ENCODE measurements at regions of chr12 and their contacts with region 1.

Region 1: GRCh38 chr12:106986625-106987430 is at the start of gene MTERF2:
- DNase-seq: peak; percentile 92 to 94
- H3K4me3 ChIP-seq: peak within 1 kb of the TSS; percentile 83
- H3K4me3 Mint-ChIP-seq: peak within 1 kb of the TSS; percentile 92
- H3K27ac Mint-ChIP-seq: peak within 1 kb of the TSS; percentile 87
- H3K4me1 ChIP-seq: peaks cover 5% of the 10 kb centered on the region; the same call in 1 of the 2 replicates
- H3K4me1 Mint-ChIP-seq: peaks cover 8% of the 10 kb centered on the region
- H3K27me3 ChIP-seq: no peaks in the 10 kb centered on the region
- H3K27me3 Mint-ChIP-seq: no peaks in the 10 kb centered on the region
- CTCF ChIP-seq: no peak
- total RNA-seq, gene MTERF2: 9.8 and 10.1 TPM in 2 replicates

Region 2: DNA sequence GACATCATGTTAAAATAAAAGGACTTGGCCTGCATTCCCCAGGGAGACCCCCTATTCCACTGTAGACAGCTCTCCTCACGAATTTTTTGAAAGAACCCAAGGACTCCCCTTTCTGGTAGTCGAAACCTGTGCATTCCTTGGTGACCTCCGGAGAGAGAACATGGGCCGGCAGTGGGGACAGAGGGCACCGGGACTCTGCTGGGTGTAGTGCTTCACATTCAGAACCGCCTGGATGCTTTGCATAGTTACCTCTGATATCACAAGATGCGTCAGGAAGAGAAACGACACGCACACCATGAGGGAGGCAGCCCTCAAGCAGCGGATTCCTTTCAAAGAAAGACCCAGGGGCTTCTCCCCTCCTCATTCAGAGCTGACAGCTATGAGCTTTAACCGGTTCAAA is 748.7 kb before region 1 on chr12:
- CTCF ChIA-PET with region 1: no interaction called
- POLR2A ChIA-PET with region 1: interaction called, 10 read pairs
- intact Hi-C with region 1: no loop called
- DNase-seq: no peak
- H3K4me3 ChIP-seq: no peak overlapping the region
- H3K4me3 Mint-ChIP-seq: no peak overlapping the region
- H3K27ac Mint-ChIP-seq: peak overlapping the region; percentile 62
- H3K4me1 ChIP-seq: no peaks in the 10 kb centered on the region
- H3K4me1 Mint-ChIP-seq: peaks cover 7% of the 10 kb centered on the region
- H3K27me3 ChIP-seq: no peaks in the 10 kb centered on the region
- H3K27me3 Mint-ChIP-seq: no peaks in the 10 kb centered on the region
- CTCF ChIP-seq: no peak

Region 3: DNA sequence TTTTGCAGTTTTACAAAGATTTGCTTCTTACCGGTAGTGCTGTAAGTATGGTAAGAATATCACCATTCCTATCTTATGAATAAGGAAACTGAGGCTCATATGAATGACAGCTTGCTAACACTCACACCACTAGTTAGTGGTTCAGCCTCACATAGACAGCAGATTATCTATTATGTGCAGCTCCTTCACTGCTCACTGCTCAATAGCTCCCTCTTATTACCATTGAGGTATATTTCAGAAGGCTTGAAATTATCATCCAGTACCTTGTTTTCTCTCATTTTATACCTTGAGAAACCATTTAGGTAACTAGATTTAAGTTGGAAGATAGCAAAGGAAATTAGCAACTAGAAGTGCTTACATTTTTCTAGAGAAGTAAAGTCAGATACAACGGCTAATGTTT is 196.8 kb before region 1 on chr12:
- CTCF ChIA-PET with region 1: no interaction called
- POLR2A ChIA-PET with region 1: no interaction called
- intact Hi-C with region 1: no loop called
- DNase-seq: no peak
- H3K4me3 ChIP-seq: no peak overlapping the region
- H3K4me3 Mint-ChIP-seq: no peak overlapping the region
- H3K27ac Mint-ChIP-seq: no peak overlapping the region
- H3K4me1 ChIP-seq: no peaks in the 10 kb centered on the region
- H3K4me1 Mint-ChIP-seq: peaks cover 8% of the 10 kb centered on the region
- H3K27me3 ChIP-seq: no peaks in the 10 kb centered on the region
- H3K27me3 Mint-ChIP-seq: no peaks in the 10 kb centered on the region
- CTCF ChIP-seq: peak; percentile 27 to 33

Region 4: GRCh38 chr12:107225635-107226034 is 238.8 kb after region 1 on chr12:
- CTCF ChIA-PET with region 1: no interaction called
- POLR2A ChIA-PET with region 1: no interaction called
- intact Hi-C with region 1: no loop called
- DNase-seq: no peak
- H3K4me3 ChIP-seq: no peak overlapping the region
- H3K4me3 Mint-ChIP-seq: no peak overlapping the region
- H3K27ac Mint-ChIP-seq: no peak overlapping the region
- H3K4me1 ChIP-seq: no peaks in the 10 kb centered on the region
- H3K4me1 Mint-ChIP-seq: no peaks in the 10 kb centered on the region
- H3K27me3 ChIP-seq: no peaks in the 10 kb centered on the region
- H3K27me3 Mint-ChIP-seq: peaks cover 16% of the 10 kb centered on the region
- CTCF ChIP-seq: no peak